Heart left ventricle (tissue), 16 donors: ENCODE measurements at regions of chr7 and their contacts with region 1.

Region 1: DNA sequence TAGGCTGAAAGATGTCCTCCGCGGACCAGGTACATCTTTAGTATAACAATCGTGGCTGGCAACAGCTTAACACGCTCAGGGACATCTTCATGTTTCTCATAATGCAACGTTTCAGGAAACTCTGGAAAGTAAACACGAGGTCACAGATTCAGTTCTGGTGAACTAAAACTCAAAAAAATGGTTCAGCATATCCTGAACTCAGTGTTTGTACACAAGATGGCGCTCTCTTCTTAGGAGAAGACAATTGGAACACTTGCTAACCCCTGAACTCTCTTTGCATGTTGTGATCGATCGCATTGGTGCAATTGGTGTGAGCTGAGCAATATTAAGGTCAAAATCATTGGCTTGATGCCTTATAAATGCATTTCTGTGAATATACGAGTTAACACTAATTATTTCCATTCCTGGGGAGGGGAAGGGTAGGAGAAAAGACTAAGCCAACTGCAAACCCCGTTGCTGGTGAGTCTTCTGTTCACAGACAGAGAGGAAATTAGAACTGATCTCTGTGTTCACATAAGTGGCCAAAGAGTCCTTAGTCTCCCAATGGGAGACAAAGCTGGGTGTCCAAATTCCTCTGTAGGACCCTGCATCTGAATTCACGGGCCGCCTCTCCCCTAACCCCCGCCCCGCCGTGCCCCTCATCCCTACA is 52.6 kb upstream of the FAM180A start:
- DNase-seq: peak in 1 of 5 donors; percentile 38
- ATAC-seq: peak in 3 of 4 donors; percentile 64 to 78 (median 65)
- H3K4me3 ChIP-seq: peak overlapping the region in 4 of 12 donors; percentile 4 to 17 (median 14)
- H3K27ac ChIP-seq: no peak overlapping the region
- H3K4me1 ChIP-seq: peaks cover 0 to 21% (median 8%) of the 10 kb centered on the region in 12 donors
- H3K27me3 ChIP-seq: no peaks in the 10 kb centered on the region
- CTCF ChIP-seq: peak; percentile 74 to 96 (median 84)
- POLR2A ChIP-seq: no peak

Region 2: DNA sequence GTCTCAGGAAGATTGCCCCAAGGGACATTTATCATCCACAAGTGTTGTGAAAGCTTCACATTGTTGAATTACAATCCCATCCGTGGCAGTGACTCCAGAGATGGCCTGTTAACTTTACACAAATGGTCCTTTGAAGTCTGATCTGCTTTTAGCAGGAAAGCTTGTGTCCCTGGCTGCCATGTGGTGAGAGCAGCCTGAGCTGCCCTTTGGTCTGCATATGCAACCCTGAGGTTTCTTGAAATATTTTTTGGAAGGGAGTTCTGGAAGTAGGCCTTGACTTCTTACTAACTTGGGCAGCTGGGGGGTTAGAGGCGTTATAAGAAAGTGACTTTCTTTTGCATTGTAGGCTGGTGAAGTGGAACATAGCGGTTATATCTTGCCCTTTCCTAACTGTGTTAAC is 11.2 kb before region 1 on chr7:
- intact Hi-C with region 1: loop called in 1 of 10 experiments (anchors 1 kb)
- DNase-seq: no peak
- ATAC-seq: no peak
- H3K4me3 ChIP-seq: no peak overlapping the region
- H3K27ac ChIP-seq: no peak overlapping the region
- H3K4me1 ChIP-seq: peaks cover 0 to 6% (median 0%) of the 10 kb centered on the region in 12 donors
- H3K27me3 ChIP-seq: no peaks in the 10 kb centered on the region
- CTCF ChIP-seq: no peak
- POLR2A ChIP-seq: no peak

Region 3: GRCh38 chr7:135911099-135911498 is 109.9 kb after region 1 on chr7:
- intact Hi-C with region 1: loop called in 1 of 10 experiments (anchors 10 kb)
- DNase-seq: peak in 4 of 5 donors; percentile 26 to 63 (median 41)
- ATAC-seq: peak in 3 of 4 donors; percentile 20 to 34 (median 29)
- H3K4me3 ChIP-seq: peak overlapping the region in 1 of 12 donors; percentile 5
- H3K27ac ChIP-seq: peak overlapping the region in 4 of 12 donors; percentile 4 to 37 (median 10)
- H3K4me1 ChIP-seq: peaks cover 0 to 24% (median 5%) of the 10 kb centered on the region in 12 donors
- H3K27me3 ChIP-seq: no peaks in the 10 kb centered on the region
- CTCF ChIP-seq: no peak
- POLR2A ChIP-seq: no peak

Region 4: DNA sequence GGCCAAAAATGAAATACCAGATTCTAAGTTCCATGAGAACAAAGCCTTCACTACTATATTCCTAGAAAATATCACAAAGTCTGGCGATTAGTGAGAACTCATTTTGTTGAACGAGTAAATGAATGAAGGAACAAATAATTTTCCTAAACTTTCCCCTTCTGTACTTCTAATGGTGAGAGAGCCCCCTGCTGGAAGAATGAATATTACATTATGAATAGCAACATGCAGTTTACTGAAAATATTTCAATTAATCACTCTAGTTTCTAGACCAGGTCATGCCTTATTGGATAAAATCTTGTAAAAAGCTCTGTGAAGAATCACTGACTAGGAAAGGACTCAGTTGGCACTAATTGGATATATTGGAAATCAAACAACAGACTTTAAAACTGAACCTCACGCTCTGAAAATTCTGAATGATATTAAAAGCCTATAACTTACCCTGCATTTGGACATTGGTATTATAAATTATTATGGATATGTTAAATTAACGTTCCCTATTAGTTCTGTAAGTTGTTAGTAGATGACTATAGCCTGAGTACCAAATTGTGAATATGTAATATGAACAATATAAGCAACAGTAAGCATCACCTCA is 208.4 kb after region 1 on chr7:
- intact Hi-C with region 1: loop called (anchors 1 to 2 kb)
- DNase-seq: no peak
- ATAC-seq: no peak
- H3K4me3 ChIP-seq: no peak overlapping the region
- H3K27ac ChIP-seq: no peak overlapping the region
- H3K4me1 ChIP-seq: no peaks in the 10 kb centered on the region
- H3K27me3 ChIP-seq: no peaks in the 10 kb centered on the region
- CTCF ChIP-seq: peak; percentile 69 to 87 (median 81)
- POLR2A ChIP-seq: no peak